Heart left ventricle (tissue), 16 donors: ENCODE measurements at regions of chr6 and their contacts with region 1.

Region 1: DNA sequence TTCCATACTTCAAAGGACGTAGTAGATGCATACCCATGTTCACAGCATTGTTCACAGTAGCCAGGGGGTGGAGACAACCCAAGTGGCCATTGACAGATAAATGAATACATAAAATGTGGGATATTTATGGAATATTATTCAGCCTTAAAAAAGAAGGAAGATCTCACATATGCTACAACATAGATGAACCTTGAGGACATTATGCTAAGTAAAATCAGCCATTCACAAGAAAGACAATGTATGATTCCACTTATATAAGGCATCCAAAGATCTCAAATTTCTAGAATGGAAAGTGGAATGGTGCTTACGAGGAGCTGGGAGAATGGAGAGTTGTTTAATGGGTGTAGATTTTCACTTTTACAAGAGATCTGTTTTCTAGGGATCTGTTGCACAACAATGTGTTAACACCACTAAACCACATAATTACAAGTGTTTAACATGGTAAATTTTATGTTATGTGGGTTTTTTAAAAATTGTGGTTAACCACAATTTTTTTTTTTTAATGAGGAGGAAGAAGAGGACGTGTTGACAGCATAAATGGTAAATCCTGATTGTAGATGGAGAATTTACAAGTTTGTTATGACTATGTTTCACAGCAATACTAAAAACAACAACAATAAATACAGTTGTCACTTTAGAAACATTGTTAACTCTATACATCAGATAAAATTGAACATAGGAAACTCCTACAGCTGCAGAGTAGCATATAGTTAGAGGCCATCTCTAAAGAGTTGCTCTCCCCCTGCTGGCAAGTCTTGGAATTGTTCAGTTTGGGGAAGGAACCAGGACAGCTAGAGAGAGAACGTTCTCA is 41.6 kb downstream of the CCN2 start:
- DNase-seq: peak in 4 of 5 donors; percentile 49 to 58 (median 58)
- ATAC-seq: peak in 1 of 4 donors; percentile 78
- H3K4me3 ChIP-seq: no peak overlapping the region
- H3K27ac ChIP-seq: no peak overlapping the region
- H3K4me1 ChIP-seq: no peaks in the 10 kb centered on the region
- H3K27me3 ChIP-seq: peaks cover 0 to 16% (median 0%) of the 10 kb centered on the region in 9 donors
- CTCF ChIP-seq: peak; percentile 76 to 92 (median 87)
- POLR2A ChIP-seq: no peak

Region 2: DNA sequence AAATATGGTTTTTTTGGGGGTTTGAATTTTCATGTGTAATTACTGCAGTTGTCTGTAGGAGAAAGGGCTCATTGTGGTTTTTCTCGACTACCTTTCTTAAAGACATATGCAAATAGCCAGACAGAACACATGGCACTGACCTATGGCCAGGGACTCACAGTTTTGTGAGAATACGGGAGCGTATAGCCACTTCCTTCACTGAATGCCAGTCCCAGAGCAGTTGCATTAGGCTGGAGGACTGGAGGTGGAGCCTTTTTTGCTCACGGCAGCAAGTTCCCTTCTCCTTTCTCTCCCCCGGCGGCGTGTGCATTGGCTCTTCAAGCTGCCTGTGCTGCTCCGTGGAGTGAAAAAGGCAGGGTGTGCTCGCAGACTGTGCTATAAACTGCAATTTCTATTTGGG is 659.5 kb before region 1 on chr6:
- intact Hi-C with region 1: no loop called
- DNase-seq: peak; percentile 49 to 71 (median 61)
- ATAC-seq: peak; percentile 60 to 98 (median 94)
- H3K4me3 ChIP-seq: peak overlapping the region in 11 of 12 donors; percentile 12 to 55 (median 43)
- H3K27ac ChIP-seq: peak overlapping the region in 1 of 12 donors; percentile 21
- H3K4me1 ChIP-seq: peaks cover 0 to 23% (median 9%) of the 10 kb centered on the region in 12 donors
- H3K27me3 ChIP-seq: no peaks in the 10 kb centered on the region
- CTCF ChIP-seq: no peak
- POLR2A ChIP-seq: no peak

Region 3: GRCh38 chr6:131303338-131303954 is 606.2 kb before region 1 on chr6:
- intact Hi-C with region 1: no loop called
- DNase-seq: no peak
- ATAC-seq: no peak
- H3K4me3 ChIP-seq: no peak overlapping the region
- H3K27ac ChIP-seq: no peak overlapping the region
- H3K4me1 ChIP-seq: no peaks in the 10 kb centered on the region
- H3K27me3 ChIP-seq: no peaks in the 10 kb centered on the region
- CTCF ChIP-seq: no peak
- POLR2A ChIP-seq: no peak

Region 4: DNA sequence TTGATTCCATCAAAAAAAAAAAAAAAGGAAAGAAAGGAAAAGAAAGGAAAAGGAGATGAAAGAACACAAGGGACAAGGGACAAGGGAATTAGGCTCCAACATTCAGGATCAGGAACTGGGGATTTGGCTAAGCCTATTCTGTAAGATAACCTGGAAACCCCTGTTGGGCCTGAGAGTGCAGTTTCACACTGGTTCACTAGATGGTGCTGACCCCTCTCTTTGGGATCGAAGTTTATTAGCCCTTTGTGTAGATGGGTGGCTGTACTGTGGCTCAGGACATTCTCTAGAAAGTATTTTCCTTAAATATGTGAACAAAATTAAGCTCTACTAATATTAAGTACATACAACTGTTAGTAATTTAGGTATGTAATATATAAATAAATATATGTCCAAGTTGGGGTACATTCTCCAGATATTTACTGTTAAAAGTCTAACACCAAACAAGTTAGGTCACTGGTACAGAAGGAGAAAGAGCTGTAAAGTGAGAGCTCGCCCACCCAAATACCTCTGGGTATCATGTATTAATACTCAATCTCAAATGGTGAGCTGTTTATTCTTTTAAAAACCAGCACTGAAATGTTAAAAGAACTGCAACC is 214.7 kb before region 1 on chr6:
- intact Hi-C with region 1: loop called (anchors 1 to 10 kb)
- DNase-seq: peak in 4 of 5 donors; percentile 27 to 36 (median 32)
- ATAC-seq: peak in 3 of 4 donors; percentile 79 to 85 (median 81)
- H3K4me3 ChIP-seq: no peak overlapping the region
- H3K27ac ChIP-seq: no peak overlapping the region
- H3K4me1 ChIP-seq: no peaks in the 10 kb centered on the region
- H3K27me3 ChIP-seq: no peaks in the 10 kb centered on the region
- CTCF ChIP-seq: peak; percentile 54 to 83 (median 75)
- POLR2A ChIP-seq: no peak

Region 5: GRCh38 chr6:131782764-131783163 is 126.8 kb before region 1 on chr6:
- intact Hi-C with region 1: loop called in 3 of 10 experiments (anchors 5 kb)
- DNase-seq: no peak
- ATAC-seq: no peak
- H3K4me3 ChIP-seq: no peak overlapping the region
- H3K27ac ChIP-seq: no peak overlapping the region
- H3K4me1 ChIP-seq: peaks cover 0 to 2% (median 0%) of the 10 kb centered on the region in 12 donors
- H3K27me3 ChIP-seq: no peaks in the 10 kb centered on the region
- CTCF ChIP-seq: no peak
- POLR2A ChIP-seq: no peak

Region 6: GRCh38 chr6:131787766-131788712 is 121.6 kb before region 1 on chr6:
- intact Hi-C with region 1: loop called in 3 of 10 experiments (anchors 5 kb)
- DNase-seq: no peak
- ATAC-seq: peak in 2 of 4 donors; percentile 31 to 44
- H3K4me3 ChIP-seq: no peak overlapping the region
- H3K27ac ChIP-seq: no peak overlapping the region
- H3K4me1 ChIP-seq: peaks cover 0 to 5% (median 0%) of the 10 kb centered on the region in 12 donors
- H3K27me3 ChIP-seq: no peaks in the 10 kb centered on the region
- CTCF ChIP-seq: peak in 4 of 12 donors; percentile 21 to 40 (median 28)
- POLR2A ChIP-seq: no peak

Region 7: DNA sequence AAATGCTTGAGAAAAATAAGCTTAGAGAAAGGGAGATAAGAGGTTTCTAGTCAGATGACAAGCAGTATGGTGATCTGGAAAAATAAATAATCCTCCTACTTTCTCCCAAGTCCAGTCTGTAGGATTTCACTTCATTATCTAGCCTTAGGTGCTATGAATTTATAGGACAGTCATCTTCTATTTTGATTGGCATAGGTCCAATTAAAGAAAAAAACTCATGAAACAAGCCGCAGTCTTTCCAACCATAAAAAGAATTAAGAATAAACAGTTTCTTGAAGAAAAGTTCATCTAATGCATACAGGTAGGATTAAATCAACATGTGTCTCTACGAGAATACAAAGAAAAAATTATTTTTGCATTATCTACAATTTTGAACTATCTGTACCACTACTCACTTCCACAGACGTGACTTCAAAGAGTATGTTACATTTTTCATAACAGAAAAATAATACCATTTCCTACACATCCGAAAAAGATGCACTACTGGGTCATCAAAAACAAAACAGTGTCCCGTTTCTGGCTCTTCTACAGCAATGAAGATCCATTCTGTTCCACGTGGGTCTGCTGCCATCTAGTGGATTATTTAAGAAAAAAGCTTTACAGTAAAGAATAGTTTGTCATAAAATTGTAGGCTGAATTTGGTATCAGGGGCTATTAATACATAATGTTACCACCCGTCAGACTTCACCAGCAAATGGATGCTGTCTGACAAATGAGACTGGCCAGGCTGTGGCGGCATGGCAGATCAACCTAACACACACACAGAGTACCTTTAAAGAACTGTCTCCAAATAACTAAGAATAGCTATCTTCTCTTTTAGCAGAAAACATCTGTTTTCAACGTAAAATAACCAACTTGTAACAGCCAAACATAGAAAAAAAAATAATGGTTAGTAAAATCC is 574.4 kb after region 1 on chr6:
- intact Hi-C with region 1: loop called in 1 of 10 experiments (anchors 10 kb)
- DNase-seq: peak in 2 of 5 donors; percentile 29 to 42
- ATAC-seq: peak in 3 of 4 donors; percentile 65 to 79 (median 72)
- H3K4me3 ChIP-seq: no peak overlapping the region
- H3K27ac ChIP-seq: no peak overlapping the region
- H3K4me1 ChIP-seq: peaks cover 0 to 33% (median 18%) of the 10 kb centered on the region in 12 donors
- H3K27me3 ChIP-seq: no peaks in the 10 kb centered on the region
- CTCF ChIP-seq: peak; percentile 60 to 83 (median 76)
- POLR2A ChIP-seq: no peak